Activated naive CD4-positive, alpha-beta T cell treated with anti-CD3 and anti-CD28 coated beads for 36 hours (primary cell): ENCODE measurements at regions of chr6 and their contacts with region 1.

Region 1: GRCh38 chr6:166956444-166957086 is at the start of gene RNASET2:
- DNase-seq: peak; percentile 99
- H3K4me3 Mint-ChIP-seq: peak within 1 kb of the TSS; percentile 86
- H3K27ac Mint-ChIP-seq: peak within 1 kb of the TSS; percentile 95
- H3K4me1 Mint-ChIP-seq: peaks cover 71% of the 10 kb centered on the region
- H3K27me3 Mint-ChIP-seq: no peaks in the 10 kb centered on the region
- total RNA-seq, gene RNASET2: 74.1 to 75.6 TPM

Region 2: GRCh38 chr6:166940643-166941068 is 15.9 kb before region 1 on chr6:
- CTCF ChIA-PET with region 1: interaction called, 17 read pairs
- intact Hi-C with region 1: loop called (anchors 1 kb)
- DNase-seq: no peak
- H3K4me3 Mint-ChIP-seq: no peak overlapping the region
- H3K27ac Mint-ChIP-seq: peak overlapping the region; percentile 97
- H3K4me1 Mint-ChIP-seq: peaks cover 61% of the 10 kb centered on the region
- H3K27me3 Mint-ChIP-seq: no peaks in the 10 kb centered on the region

Region 3: DNA sequence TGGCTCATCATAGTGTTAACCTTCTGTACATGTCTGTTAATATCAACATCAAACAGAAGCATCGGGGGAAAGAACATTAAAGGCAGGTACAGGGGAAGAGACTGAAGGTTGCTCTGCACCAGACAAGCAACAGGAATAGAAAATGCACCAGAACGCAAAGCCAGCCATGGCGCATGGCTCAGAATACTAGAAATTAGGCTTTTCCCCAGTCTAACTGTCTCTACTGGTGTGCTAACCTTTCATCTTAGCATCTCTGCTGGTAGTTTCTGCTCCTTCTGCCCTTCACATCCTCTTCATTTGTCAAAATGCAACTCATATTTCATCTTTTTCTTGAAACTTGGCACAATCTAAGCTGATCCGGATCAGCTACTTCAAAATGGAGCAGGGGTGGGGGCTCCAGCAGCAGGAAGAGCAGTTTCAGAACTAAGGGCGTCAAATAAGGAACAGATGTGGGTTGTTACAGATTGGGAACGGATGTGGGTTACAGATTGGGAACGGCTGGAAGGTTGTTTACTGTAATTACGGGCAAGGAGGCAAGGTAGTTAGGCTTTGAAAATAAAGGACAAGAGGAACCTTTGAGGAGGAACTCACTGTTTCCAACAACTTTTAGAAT is 12.9 kb after region 1 on chr6:
- CTCF ChIA-PET with region 1: no interaction called
- intact Hi-C with region 1: loop called (anchors 1 kb)
- DNase-seq: peak; percentile 43
- H3K4me3 Mint-ChIP-seq: no peak overlapping the region
- H3K27ac Mint-ChIP-seq: peak overlapping the region; percentile 76
- H3K4me1 Mint-ChIP-seq: peaks cover 35% of the 10 kb centered on the region
- H3K27me3 Mint-ChIP-seq: no peaks in the 10 kb centered on the region